Activated B cell treated with CpG ODN at 0.5 μM for 24 hours (primary cell): ENCODE measurements at regions of chrX and their contacts with region 1.

Region 1: DNA sequence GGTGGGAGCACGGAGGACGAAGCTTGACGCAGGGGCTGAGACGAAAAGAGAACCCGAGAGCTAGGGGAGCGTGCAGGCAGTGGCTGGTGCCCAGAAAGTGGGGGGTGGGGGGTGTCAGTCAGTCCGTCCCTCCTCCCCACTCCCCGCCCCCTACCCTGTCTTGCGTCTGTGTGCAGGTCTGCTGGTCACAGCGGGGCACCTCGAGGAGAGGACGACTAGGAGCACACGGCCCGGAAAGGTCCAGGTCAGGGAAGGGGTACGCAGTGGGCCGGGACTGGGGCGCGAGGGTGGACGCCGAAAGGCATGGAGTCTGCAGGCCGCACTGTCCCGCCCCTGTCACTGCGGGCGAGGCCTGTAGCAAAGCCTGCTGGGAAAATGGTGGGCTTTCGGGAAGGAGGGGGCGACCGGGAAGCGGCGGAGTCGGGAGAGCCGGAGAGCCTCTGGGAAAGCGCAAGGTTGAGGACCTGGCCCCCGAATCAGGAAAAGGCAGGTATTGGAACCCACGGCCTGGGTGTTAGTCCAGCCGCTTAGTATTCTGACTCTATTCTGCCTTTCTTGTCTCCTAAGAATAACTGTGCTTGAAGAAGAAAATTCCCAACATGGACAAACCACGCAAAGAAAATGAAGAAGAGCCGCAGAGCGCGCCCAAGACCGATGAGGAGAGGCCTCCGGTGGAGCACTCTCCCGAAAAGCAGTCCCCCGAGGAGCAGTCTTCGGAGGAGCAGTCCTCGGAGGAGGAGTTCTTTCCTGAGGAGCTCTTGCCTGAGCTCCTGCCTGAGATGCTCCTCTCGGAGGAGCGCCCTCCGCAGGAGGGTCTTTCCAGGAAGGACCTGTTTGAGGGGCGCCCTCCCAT is 769 bp downstream of the TCEAL1 start:
- DNase-seq: peak; percentile 16
- ATAC-seq: peak; percentile 55
- H3K4me3 Mint-ChIP-seq: peak overlapping the region; percentile 90
- H3K27ac Mint-ChIP-seq: peak overlapping the region; percentile 87
- H3K4me1 Mint-ChIP-seq: peaks cover 16% of the 10 kb centered on the region
- H3K27me3 Mint-ChIP-seq: no peaks in the 10 kb centered on the region
- CTCF ChIP-seq: no peak

Region 2: DNA sequence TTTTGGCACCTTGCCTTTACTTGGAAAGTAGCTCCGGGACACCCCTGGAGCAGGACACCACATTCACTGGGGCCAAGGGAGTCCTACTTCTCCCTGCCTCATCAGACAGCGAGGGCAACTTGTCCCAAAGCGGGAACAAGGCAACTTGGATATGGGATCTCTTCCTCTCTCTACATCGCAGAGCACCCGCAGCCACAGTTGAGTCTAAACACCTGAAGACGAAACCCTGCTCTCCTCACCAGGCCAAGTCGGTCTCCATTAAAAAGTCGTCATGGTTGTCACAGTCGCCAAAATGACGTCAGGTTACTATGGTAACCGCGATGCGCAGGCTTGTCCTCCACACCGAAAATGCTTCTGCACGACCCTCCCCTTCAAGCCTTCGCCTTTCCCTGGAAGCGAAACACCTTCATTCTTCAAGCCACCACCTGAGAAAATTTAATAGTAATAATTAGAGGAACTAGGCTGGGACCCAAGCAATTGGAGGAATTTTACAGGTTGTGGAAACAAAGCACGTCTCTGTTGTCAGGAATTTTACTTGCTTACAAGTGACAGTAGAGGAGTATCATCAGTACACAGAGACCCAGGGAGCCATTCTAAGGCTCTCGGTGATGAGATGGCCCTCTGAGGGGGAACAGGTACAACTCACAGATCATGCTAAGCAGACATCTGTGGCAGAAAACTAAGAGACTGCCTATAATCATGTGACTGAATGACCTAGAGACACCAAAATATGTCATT is 74.7 kb before region 1 on chrX:
- CTCF ChIA-PET with region 1: no interaction called
- POLR2A ChIA-PET with region 1: no interaction called
- intact Hi-C with region 1: loop called (anchors 10 kb)
- DNase-seq: peak; percentile 32
- ATAC-seq: peak; percentile 85
- H3K4me3 Mint-ChIP-seq: peak overlapping the region; percentile 91
- H3K27ac Mint-ChIP-seq: peak overlapping the region; percentile 83
- H3K4me1 Mint-ChIP-seq: peaks cover 11% of the 10 kb centered on the region
- H3K27me3 Mint-ChIP-seq: no peaks in the 10 kb centered on the region
- CTCF ChIP-seq: no peak

Region 3: GRCh38 chrX:103607364-103608305 is 21.9 kb before region 1 on chrX and contains the start of gene TCEAL3:
- CTCF ChIA-PET with region 1: no interaction called
- POLR2A ChIA-PET with region 1: no interaction called
- intact Hi-C with region 1: loop called (anchors 1 kb)
- DNase-seq: peak; percentile 51
- ATAC-seq: peak; percentile 83
- H3K4me3 Mint-ChIP-seq: peak within 1 kb of the TSS; percentile 85
- H3K27ac Mint-ChIP-seq: peak within 1 kb of the TSS; percentile 63
- H3K4me1 Mint-ChIP-seq: peaks cover 7% of the 10 kb centered on the region
- H3K27me3 Mint-ChIP-seq: no peaks in the 10 kb centered on the region
- CTCF ChIP-seq: no peak
- total RNA-seq, gene TCEAL3: 7.7 and 8.5 TPM in 2 replicates

Region 4: DNA sequence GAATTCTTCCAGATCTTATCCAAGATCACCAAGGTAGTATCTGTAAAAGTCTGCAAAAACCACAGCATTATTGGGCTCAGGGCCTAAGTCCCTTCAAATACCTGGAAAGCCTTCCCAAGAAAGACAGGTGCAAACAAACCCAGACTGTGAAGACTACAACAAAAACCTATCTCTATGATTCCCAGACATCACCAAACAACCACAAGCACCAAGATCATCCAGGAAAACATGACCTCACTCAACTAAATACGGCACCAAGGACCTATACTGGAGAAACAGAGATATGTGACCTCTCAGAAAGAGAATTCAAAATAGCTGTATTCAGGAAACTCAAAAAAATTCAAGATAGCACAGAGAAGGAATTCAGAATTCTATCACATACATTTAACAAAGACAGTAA is 14.6 kb after region 1 on chrX:
- CTCF ChIA-PET with region 1: no interaction called
- POLR2A ChIA-PET with region 1: no interaction called
- intact Hi-C with region 1: no loop called
- DNase-seq: no peak
- ATAC-seq: no peak
- H3K4me3 Mint-ChIP-seq: no peak overlapping the region
- H3K27ac Mint-ChIP-seq: no peak overlapping the region
- H3K4me1 Mint-ChIP-seq: no peaks in the 10 kb centered on the region
- H3K27me3 Mint-ChIP-seq: peaks cover 3% of the 10 kb centered on the region
- CTCF ChIP-seq: no peak

Region 5: GRCh38 chrX:103913356-103914020 is 283.9 kb after region 1 on chrX:
- CTCF ChIA-PET with region 1: no interaction called
- POLR2A ChIA-PET with region 1: no interaction called
- intact Hi-C with region 1: no loop called
- DNase-seq: no peak
- ATAC-seq: no peak
- H3K4me3 Mint-ChIP-seq: no peak overlapping the region
- H3K27ac Mint-ChIP-seq: no peak overlapping the region
- H3K4me1 Mint-ChIP-seq: peaks cover 3% of the 10 kb centered on the region
- H3K27me3 Mint-ChIP-seq: no peaks in the 10 kb centered on the region
- CTCF ChIP-seq: no peak